Activated T-helper 2 cell treated with anti-CD3 and anti-CD28 coated beads, Interferon-gamma antibody, Interleukin-2, Interleukin-4, amounts not matched to agents 10 μg/mL and 5 μg/mL and 100 μg/mL, durations not matched to agents 14 hours and 24 hours and 36 hours (primary cell): ENCODE measurements at regions of chr4 and their contacts with region 1.

Region 1: GRCh38 chr4:128191115-128191781 is 96.4 kb downstream of the PGRMC2 start:
- DNase-seq: peak; percentile 40
- H3K4me3 Mint-ChIP-seq: no peak overlapping the region
- H3K27ac Mint-ChIP-seq: no peak overlapping the region
- H3K4me1 Mint-ChIP-seq: peaks cover 14% of the 10 kb centered on the region
- H3K27me3 Mint-ChIP-seq: no peaks in the 10 kb centered on the region

Region 2: GRCh38 chr4:128220286-128221235 is 29.3 kb after region 1 on chr4:
- intact Hi-C with region 1: loop called (anchors 2 kb)
- DNase-seq: no peak
- H3K4me3 Mint-ChIP-seq: no peak overlapping the region
- H3K27ac Mint-ChIP-seq: no peak overlapping the region
- H3K4me1 Mint-ChIP-seq: no peaks in the 10 kb centered on the region
- H3K27me3 Mint-ChIP-seq: no peaks in the 10 kb centered on the region

Region 3: DNA sequence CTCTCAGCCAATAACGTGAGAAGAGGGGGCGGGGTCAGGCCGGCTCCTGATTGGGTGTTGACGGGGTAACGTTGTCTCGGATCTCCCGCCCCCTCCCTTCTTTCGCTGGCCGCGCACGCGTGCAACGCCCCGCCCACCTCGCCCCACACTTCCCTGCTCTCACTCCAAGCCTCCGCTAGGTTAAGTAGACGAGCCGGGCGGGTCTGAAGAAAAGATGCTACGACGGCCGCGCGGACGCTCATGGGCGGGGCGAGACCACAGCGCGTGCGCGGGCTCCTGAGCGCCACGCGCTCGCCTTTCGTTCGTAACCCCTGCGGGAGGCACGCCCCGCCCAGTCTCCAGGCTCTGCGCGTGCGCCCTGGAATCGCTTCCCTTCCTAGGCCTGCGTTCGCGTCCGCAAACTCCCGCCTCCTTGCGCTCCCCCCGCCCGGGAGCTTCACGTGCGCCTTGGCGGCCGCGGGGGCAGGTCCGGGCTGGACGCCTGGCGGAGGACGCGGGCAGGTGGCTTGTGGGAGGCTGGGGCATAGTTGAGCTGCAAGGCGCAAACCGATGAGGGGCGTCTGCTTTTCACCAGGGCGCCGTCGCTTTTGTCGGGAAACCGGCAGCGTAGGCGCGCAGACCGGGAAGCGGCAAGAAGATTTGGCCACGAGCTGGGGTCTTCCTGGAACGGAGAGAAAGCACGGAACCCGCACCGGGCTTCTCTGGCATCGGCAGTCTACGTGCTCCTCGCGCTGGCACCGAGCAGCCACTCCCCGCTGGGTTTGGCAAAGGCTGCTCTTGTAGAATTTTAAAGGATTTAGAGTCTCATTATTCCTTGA is 96.8 kb after region 1 on chr4:
- intact Hi-C with region 1: loop called (anchors 2 kb)
- DNase-seq: peak; percentile 97
- H3K4me3 Mint-ChIP-seq: peak overlapping the region; percentile 95
- H3K27ac Mint-ChIP-seq: peak overlapping the region; percentile 91
- H3K4me1 Mint-ChIP-seq: peaks cover 29% of the 10 kb centered on the region
- H3K27me3 Mint-ChIP-seq: no peaks in the 10 kb centered on the region

Region 4: DNA sequence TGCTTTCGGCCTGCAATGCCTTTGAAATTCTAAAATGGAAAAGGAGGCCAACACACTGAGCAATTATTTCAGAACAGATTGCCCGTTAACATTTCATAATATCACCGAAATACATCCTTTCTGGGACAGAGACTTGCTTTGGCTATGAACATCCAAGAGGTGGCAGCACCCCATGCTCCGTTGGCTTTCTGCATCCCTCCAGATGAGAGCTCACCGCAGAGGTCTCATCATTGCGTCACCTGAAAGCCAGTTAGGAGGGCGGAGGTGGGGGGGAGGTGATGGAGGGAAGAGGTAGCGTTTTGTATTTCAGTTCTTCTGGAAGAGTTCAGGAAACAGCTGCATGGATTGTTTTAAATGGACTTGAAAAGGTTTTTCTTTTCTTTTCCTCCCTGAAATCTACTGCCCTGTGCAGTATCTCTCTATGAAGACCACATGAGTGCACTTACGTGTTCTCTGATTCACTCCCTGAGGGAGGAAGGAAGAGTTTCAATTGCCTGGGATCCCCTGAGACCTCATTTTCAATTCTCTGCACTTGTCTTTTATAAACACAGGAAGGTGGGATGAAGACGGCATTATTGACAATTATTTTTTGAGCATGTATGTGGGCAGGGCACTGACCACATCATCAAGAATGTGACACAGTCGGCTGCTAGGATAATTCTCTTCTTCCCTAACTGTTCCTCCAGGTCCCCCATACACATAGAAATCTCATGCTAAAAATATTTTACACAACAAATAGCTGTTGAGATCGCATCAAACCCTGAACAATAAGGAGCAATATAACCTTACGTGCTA is 263.2 kb after region 1 on chr4:
- intact Hi-C with region 1: loop called (anchors 10 kb)
- DNase-seq: peak; percentile 41
- H3K4me3 Mint-ChIP-seq: no peak overlapping the region
- H3K27ac Mint-ChIP-seq: no peak overlapping the region
- H3K4me1 Mint-ChIP-seq: peaks cover 10% of the 10 kb centered on the region
- H3K27me3 Mint-ChIP-seq: peaks cover 2% of the 10 kb centered on the region

Region 5: DNA sequence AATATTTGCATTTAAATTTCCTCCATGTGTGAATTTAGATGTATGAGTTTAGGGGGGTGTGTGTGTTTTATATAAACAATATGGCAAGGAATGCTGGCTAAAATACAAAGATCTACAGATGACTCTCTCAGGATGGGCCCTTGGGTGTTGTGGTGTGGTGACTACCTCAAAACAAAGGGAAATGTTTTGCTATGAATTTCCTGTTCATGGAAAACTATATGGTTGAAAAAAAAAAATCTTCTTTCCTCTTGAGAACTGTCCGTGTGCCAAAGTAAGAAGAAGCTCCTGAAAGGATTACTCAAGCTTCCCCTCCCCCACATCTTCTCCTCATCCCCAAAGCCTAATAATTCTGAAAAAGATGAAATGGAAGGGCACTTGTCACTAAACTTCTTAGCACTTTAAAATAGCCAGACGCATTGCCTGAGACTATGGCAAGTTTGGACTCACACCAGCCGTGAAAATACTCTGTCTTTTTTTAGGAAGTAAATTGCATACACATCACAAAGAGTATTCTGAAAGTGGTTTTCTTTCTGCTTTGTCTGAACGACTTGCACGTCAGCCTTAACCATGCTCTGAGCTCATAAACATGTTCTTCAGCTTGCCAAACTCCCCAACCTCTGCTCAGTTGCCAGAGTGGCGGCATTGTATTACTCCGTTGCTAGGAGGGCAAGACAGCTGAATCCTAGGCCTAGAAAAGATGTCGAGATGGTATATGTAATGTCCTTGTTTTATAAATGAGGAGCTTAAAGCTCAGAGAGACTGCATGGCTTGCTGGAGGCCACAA is 367.8 kb after region 1 on chr4:
- intact Hi-C with region 1: loop called (anchors 10 kb)
- DNase-seq: no peak
- H3K4me3 Mint-ChIP-seq: no peak overlapping the region
- H3K27ac Mint-ChIP-seq: no peak overlapping the region
- H3K4me1 Mint-ChIP-seq: peaks cover 1% of the 10 kb centered on the region
- H3K27me3 Mint-ChIP-seq: no peaks in the 10 kb centered on the region